ENCODE measurements at regions of chr12 and their contacts with region 1.

Region 1: GRCh38 chr12:4269279-4269991 is 4.1 kb upstream of the CCND2 start:
- DNase-seq: peak; percentile 96
- H3K4me3 Mint-ChIP-seq: peak overlapping the region; percentile 97
- H3K27ac Mint-ChIP-seq: peak overlapping the region; percentile 99
- H3K4me1 Mint-ChIP-seq: peaks cover 20% of the 10 kb centered on the region
- H3K27me3 Mint-ChIP-seq: no peaks in the 10 kb centered on the region

Region 2: DNA sequence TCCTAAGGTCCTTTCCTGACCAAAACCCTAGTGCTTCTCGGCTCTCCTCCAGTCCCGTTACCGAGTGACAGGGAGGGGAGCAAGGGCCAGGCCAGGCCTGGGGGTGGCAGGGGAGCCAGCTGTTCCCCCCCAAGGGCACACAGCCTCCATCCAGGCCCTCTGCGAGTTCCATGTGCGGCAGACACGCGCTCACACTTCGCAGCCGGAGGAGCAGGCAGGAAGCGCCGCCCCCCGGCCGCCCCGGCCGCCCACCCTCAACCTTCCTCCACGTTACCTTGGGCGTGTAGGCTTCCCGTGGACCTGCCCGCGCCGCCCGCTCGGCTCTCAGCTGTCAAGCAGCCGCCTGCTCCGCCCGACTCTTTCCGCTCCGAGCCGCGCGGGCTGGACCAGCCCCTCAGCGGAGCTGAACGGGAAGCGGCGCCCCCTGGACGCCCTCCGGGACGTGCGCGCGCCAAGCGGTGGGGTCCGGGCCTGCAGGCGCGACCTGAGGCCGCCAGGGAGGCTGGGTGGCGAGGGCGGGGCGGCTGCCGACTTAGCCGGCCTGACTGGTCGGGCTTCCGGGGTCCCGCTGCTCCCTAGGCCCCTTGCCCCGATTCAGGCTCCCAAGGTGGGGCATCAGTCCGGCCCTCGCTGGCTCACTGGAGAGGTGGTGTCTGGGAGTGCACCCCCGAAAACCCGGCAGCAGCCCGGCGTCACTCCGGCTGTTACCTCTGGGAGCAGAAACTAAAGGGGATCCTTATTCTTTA is 516.5 kb before region 1 on chr12 and contains the start of gene CRACR2A:
- CTCF ChIA-PET with region 1: no interaction called
- POLR2A ChIA-PET with region 1: no interaction called
- intact Hi-C with region 1: loop called (anchors 2 kb)
- DNase-seq: peak; percentile 89
- H3K4me3 Mint-ChIP-seq: peak within 1 kb of the TSS; percentile 89
- H3K27ac Mint-ChIP-seq: peak within 1 kb of the TSS; percentile 93
- H3K4me1 Mint-ChIP-seq: peaks cover 51% of the 10 kb centered on the region
- H3K27me3 Mint-ChIP-seq: no peaks in the 10 kb centered on the region
- total RNA-seq, gene CRACR2A: 15.8 to 19.1 TPM

Region 3: DNA sequence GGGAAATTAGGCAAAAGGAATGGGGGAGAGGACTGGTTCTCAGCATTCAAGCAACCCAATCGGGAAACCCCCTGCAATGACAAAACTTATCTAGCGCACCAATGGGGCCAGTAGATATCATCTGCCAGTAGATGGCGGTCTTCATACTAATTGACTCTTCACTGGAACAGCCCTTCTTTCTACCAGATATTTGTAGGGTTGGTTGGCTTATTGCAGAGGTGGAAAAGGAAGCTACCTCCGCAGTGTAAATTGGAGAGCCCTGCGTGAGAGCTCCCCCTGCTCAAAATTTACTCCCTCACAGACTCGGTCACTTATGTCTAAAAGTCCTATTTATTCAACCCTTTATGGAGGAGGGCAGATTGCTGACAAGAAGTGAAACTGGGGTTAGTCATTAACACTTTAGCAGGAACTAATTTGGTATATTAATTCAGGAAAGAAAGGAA is 162.0 kb before region 1 on chr12:
- CTCF ChIA-PET with region 1: interaction called, 92 read pairs
- POLR2A ChIA-PET with region 1: interaction called, 10 read pairs
- intact Hi-C with region 1: loop called (anchors 1 kb)
- DNase-seq: peak; percentile 80
- H3K4me3 Mint-ChIP-seq: peak overlapping the region; percentile 17
- H3K27ac Mint-ChIP-seq: peak overlapping the region; percentile 75
- H3K4me1 Mint-ChIP-seq: peaks cover 40% of the 10 kb centered on the region
- H3K27me3 Mint-ChIP-seq: peaks cover 8% of the 10 kb centered on the region

Region 4: GRCh38 chr12:4141348-4142270 is 127.8 kb before region 1 on chr12:
- CTCF ChIA-PET with region 1: interaction called, 76 read pairs
- POLR2A ChIA-PET with region 1: interaction called, 205 read pairs
- intact Hi-C with region 1: loop called (anchors 1 kb)
- DNase-seq: no peak
- H3K4me3 Mint-ChIP-seq: no peak overlapping the region
- H3K27ac Mint-ChIP-seq: peak overlapping the region; percentile 90
- H3K4me1 Mint-ChIP-seq: peaks cover 81% of the 10 kb centered on the region
- H3K27me3 Mint-ChIP-seq: no peaks in the 10 kb centered on the region

Region 5: DNA sequence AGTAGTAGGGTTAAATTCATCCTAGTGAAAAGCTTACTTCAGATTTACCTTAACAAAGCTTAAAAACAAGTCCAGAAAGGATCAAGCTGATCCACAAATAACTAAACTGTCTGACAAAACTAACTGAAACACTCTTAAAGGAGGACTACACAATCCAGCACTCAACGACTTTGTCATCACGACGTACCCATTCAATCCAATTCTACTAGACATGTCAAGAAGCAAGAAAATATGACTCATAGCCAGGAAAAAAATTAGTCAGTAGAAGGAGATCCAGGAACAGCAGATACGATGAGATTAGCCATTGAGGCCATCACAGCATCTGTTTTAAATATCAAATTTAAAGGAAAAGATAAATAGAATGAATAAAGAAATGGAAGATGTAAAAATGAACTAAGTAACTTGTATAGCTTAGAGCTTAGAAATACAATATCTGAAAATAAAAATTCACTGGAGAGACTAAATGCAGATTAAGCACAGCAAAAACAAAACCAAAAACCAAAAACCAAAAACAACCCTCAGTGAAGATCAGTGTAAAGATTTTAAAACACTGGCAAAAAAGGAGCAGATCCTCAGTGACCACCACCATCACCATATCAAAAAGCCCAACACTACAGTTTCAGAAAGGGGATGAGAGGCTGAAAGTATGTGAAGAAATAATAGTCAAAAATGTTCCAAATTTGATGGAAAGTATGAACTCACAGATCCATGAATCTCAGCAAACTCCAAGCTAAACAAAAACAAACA is 90.8 kb before region 1 on chr12:
- CTCF ChIA-PET with region 1: interaction called, 3 read pairs
- POLR2A ChIA-PET with region 1: interaction called, 12 read pairs
- intact Hi-C with region 1: loop called (anchors 1 kb)
- DNase-seq: peak; percentile 39
- H3K4me3 Mint-ChIP-seq: peak overlapping the region; percentile 27
- H3K27ac Mint-ChIP-seq: peak overlapping the region; percentile 76
- H3K4me1 Mint-ChIP-seq: peaks cover 20% of the 10 kb centered on the region
- H3K27me3 Mint-ChIP-seq: peaks cover 2% of the 10 kb centered on the region

Region 6: DNA sequence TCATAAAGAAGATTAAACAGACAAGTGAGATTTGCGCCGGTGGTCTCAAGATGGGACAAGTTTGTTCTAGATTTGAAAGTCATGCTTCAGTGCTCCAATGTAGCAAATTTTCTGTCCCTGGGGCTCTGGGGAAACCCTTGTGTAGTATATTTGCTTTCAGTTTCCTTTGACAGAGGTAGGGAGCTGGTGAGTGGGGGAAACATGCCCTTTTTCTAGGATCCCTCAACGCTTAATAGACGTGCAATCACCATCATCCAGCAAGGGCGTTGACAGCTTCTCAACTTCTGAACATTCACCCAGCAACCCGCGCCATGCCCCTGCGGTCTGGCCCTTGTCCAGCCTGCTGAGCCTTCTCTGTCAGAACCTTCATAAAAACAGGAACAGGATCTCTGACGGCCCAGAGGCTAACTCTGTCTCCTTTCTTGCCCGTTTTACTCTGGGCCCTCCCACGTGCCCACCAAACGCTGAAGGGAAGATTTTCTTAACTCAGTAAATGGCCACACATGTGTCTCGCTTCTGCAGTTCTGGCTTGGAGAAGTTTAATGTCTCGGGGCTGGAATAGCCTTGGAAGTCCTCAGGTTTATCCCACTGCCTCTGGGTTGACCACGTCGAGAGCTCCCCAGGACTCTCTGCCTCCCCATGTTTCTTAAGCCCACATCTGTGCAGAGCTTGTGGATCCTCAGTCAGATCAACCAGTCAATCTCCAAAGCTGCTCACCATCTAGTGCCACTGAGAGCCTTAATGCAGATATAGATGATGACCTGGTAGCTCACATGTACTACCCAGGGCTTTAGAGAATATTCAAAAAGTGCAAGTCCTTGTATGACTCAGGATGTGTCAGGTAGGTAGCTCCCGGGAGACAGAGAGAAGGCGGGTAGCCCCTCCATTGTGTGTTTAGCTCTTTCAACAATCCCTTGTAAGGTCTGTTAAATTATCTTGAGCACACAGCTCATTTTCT is 53.9 kb before region 1 on chr12:
- CTCF ChIA-PET with region 1: interaction called, 4 read pairs
- POLR2A ChIA-PET with region 1: interaction called, 23 read pairs
- intact Hi-C with region 1: loop called (anchors 5 kb)
- DNase-seq: peak; percentile 70
- H3K4me3 Mint-ChIP-seq: peak overlapping the region; percentile 59
- H3K27ac Mint-ChIP-seq: peak overlapping the region; percentile 86
- H3K4me1 Mint-ChIP-seq: peaks cover 36% of the 10 kb centered on the region
- H3K27me3 Mint-ChIP-seq: no peaks in the 10 kb centered on the region

Region 7: DNA sequence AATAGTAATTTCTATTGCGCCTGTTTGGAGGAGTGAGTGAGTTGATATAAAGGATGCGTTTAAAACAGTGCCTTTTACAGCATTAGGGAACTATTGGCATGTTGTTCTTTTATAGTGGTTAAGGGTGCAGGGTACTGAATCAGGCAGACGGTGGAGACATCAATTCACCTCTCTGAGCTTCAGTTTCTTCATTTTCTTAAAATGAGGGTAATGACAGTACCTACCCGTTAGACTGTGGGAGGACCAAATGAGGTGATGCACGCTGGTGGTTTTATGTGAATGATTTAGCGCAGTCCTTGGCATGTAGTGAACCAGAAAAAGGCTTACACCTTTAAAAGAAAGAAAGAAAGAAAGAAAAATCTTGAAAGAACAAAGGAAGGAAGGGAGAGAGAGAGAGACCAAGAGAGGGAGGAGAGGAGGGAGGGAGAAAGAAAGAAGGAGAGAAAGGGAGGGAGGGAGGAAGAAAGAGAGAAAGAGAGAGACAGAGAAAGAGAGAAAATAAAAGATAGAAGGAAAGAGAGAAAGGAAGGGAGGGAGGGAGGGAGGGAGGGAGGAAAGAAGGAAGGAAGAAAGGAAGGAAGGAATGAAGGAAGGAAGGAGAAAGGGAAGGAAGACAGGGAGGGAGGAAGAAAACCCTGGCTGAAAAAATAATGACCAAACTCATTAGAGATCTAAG is 18.1 kb before region 1 on chr12:
- CTCF ChIA-PET with region 1: interaction called, 5 read pairs
- POLR2A ChIA-PET with region 1: interaction called, 3 read pairs
- intact Hi-C with region 1: loop called (anchors 1 kb)
- DNase-seq: peak; percentile 61
- H3K4me3 Mint-ChIP-seq: no peak overlapping the region
- H3K27ac Mint-ChIP-seq: no peak overlapping the region
- H3K4me1 Mint-ChIP-seq: peaks cover 15% of the 10 kb centered on the region
- H3K27me3 Mint-ChIP-seq: peaks cover 2% of the 10 kb centered on the region